GM12878 (cell line): ENCODE measurements at regions of chr12 and their contacts with region 1.

Region 1: GRCh38 chr12:50162230-50162629 is 4.9 kb downstream of the CERS5 start:
- DNase-seq: no peak
- ATAC-seq: no peak
- H3K4me3 ChIP-seq: no peak overlapping the region
- H3K27ac ChIP-seq: no peak overlapping the region
- H3K4me1 ChIP-seq: no peaks in the 10 kb centered on the region
- H3K27me3 ChIP-seq: no peaks in the 10 kb centered on the region
- CTCF ChIP-seq: no peak
- EP300 ChIP-seq: no peak
- POLR2A ChIP-seq: no peak
- RAD21 ChIP-seq: no peak

Region 2: GRCh38 chr12:50032639-50033581 is 129.3 kb before region 1 on chr12:
- CTCF ChIA-PET with region 1: no interaction called
- POLR2A ChIA-PET with region 1: no interaction called
- RAD21 ChIA-PET with region 1: no interaction called
- SMC1A ChIA-PET with region 1: no interaction called
- in situ Hi-C with region 1: no loop called
- intact Hi-C with region 1: no loop called
- DNase-seq: no peak
- ATAC-seq: no peak; the same call in 2 of the 3 replicates
- H3K4me3 ChIP-seq: no peak overlapping the region
- H3K27ac ChIP-seq: no peak overlapping the region
- H3K4me1 ChIP-seq: no peaks in the 10 kb centered on the region
- H3K27me3 ChIP-seq: no peaks in the 10 kb centered on the region
- CTCF ChIP-seq: no peak
- EP300 ChIP-seq: no peak
- POLR2A ChIP-seq: no peak
- RAD21 ChIP-seq: no peak

Region 3: DNA sequence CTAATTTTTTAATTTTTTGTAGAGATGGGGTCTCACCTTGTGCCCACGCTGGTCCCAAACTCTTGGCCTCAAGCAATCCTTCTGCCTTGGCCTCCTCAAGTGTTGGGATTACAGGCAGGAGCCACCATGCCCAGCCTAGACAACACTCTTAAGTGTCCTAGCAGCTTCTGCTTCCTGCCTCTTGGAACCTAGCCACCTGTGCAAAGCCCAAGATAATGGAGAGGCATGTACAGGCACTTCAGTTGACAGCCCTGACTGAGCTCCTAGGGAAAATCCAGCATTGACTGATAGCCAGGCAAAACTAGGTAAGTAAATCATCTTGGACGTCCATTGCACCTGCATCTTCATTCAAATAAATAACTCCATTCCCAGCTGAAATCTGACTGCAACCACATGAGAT is 34.7 kb before region 1 on chr12:
- CTCF ChIA-PET with region 1: interaction called, 5 read pairs
- POLR2A ChIA-PET with region 1: interaction called, 3 read pairs
- RAD21 ChIA-PET with region 1: interaction called, 3 read pairs
- SMC1A ChIA-PET with region 1: interaction called, 6 read pairs
- in situ Hi-C with region 1: no loop called
- intact Hi-C with region 1: loop called (anchors 5 kb)
- DNase-seq: no peak
- ATAC-seq: no peak
- H3K4me3 ChIP-seq: no peak overlapping the region
- H3K27ac ChIP-seq: no peak overlapping the region
- H3K4me1 ChIP-seq: peaks cover 11% of the 10 kb centered on the region; the same call in 1 of the 2 replicates
- H3K27me3 ChIP-seq: no peaks in the 10 kb centered on the region
- CTCF ChIP-seq: no peak
- EP300 ChIP-seq: no peak
- POLR2A ChIP-seq: no peak
- RAD21 ChIP-seq: no peak

Region 4: GRCh38 chr12:50145439-50145838 is 16.8 kb before region 1 on chr12:
- CTCF ChIA-PET with region 1: interaction called, 4 read pairs
- POLR2A ChIA-PET with region 1: interaction called, 4 read pairs
- RAD21 ChIA-PET with region 1: no interaction called
- SMC1A ChIA-PET with region 1: interaction called, 12 read pairs
- in situ Hi-C with region 1: no loop called
- intact Hi-C with region 1: no loop called
- DNase-seq: no peak
- ATAC-seq: no peak
- H3K4me3 ChIP-seq: no peak overlapping the region
- H3K27ac ChIP-seq: no peak overlapping the region
- H3K4me1 ChIP-seq: no peaks in the 10 kb centered on the region
- H3K27me3 ChIP-seq: no peaks in the 10 kb centered on the region
- CTCF ChIP-seq: no peak
- EP300 ChIP-seq: no peak
- POLR2A ChIP-seq: no peak
- RAD21 ChIP-seq: no peak